WTC11 (cell line): ENCODE measurements at regions of chr10 and their contacts with region 1.

Region 1: DNA sequence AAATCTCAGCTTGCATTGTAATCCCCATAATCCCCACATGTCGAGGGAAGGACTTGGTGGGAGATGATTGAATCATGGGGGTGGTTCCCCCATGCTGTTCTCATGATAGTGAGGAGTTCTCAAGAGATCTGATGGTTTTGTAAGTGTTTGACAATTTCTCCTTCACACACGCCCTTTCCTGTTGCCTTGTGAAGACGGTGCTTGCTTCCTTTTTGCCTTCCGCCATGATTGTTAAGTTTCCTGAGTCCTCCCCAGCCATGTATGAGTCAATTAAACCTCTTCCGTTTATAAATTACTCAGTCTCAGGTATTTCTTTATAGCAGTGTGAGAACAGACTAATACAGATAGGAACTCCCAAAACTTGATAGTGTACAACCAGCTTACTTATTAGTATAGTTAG is 98.6 kb downstream of the CREM start:
- DNase-seq: no peak
- ATAC-seq: no peak
- H3K4me3 Mint-ChIP-seq: no peak overlapping the region
- H3K27ac Mint-ChIP-seq: no peak overlapping the region
- H3K4me1 Mint-ChIP-seq: peaks cover 4% of the 10 kb centered on the region
- H3K27me3 Mint-ChIP-seq: no peaks in the 10 kb centered on the region
- CTCF ChIP-seq: no peak

Region 2: GRCh38 chr10:35126530-35127296 is 98.5 kb before region 1 on chr10 and contains the start of gene CREM:
- CTCF ChIA-PET with region 1: interaction called, 11 read pairs
- POLR2A ChIA-PET with region 1: no interaction called
- DNase-seq: peak; percentile 99
- ATAC-seq: peak; percentile 94
- H3K4me3 Mint-ChIP-seq: peak within 1 kb of the TSS; percentile 87
- H3K27ac Mint-ChIP-seq: peak within 1 kb of the TSS; percentile 97
- H3K4me1 Mint-ChIP-seq: peaks cover 13% of the 10 kb centered on the region
- H3K27me3 Mint-ChIP-seq: no peaks in the 10 kb centered on the region; the same call in 1 of the 2 replicates
- CTCF ChIP-seq: peak; percentile 94
- total RNA-seq, gene CREM: 17.3 to 23.6 TPM (median 18.3 TPM) in 3 replicates